ENCODE measurements at regions of chr18 and their contacts with region 1.

Region 1: GRCh38 chr18:27599202-27599829 is 414.2 kb upstream of the CHST9 start:
- DNase-seq: peak; percentile 45 to 77
- H3K4me3 ChIP-seq: no peak overlapping the region
- H3K27ac ChIP-seq: no peak overlapping the region
- H3K4me1 ChIP-seq: peaks cover 0 to 1% (median 0%) of the 10 kb centered on the region in 4 donors
- H3K27me3 ChIP-seq: no peaks in the 10 kb centered on the region
- CTCF ChIP-seq: peak in 5 of 7 experiments; percentile 54 to 85 (median 76)
- EP300 ChIP-seq: no peak
- POLR2A ChIP-seq: no peak

Region 2: GRCh38 chr18:27378431-27379095 is 220.8 kb before region 1 on chr18:
- intact Hi-C with region 1: loop called (anchors 10 kb)
- DNase-seq: peak in 1 of 2 donors; percentile 28
- H3K4me3 ChIP-seq: no peak overlapping the region
- H3K27ac ChIP-seq: no peak overlapping the region
- H3K4me1 ChIP-seq: no peaks in the 10 kb centered on the region
- H3K27me3 ChIP-seq: no peaks in the 10 kb centered on the region
- CTCF ChIP-seq: no peak
- EP300 ChIP-seq: no peak
- POLR2A ChIP-seq: no peak

Region 3: GRCh38 chr18:27695503-27695902 is 96.2 kb after region 1 on chr18:
- intact Hi-C with region 1: no loop called
- DNase-seq: peak in 1 of 2 donors; percentile 26
- H3K4me3 ChIP-seq: no peak overlapping the region
- H3K27ac ChIP-seq: no peak overlapping the region
- H3K4me1 ChIP-seq: no peaks in the 10 kb centered on the region
- H3K27me3 ChIP-seq: no peaks in the 10 kb centered on the region
- CTCF ChIP-seq: no peak
- EP300 ChIP-seq: no peak
- POLR2A ChIP-seq: no peak

Region 4: GRCh38 chr18:28559511-28559910 is 960.2 kb after region 1 on chr18:
- intact Hi-C with region 1: no loop called
- DNase-seq: no peak
- H3K4me3 ChIP-seq: no peak overlapping the region
- H3K27ac ChIP-seq: no peak overlapping the region
- H3K4me1 ChIP-seq: no peaks in the 10 kb centered on the region
- H3K27me3 ChIP-seq: no peaks in the 10 kb centered on the region
- CTCF ChIP-seq: no peak
- EP300 ChIP-seq: no peak
- POLR2A ChIP-seq: no peak